Heart right ventricle (tissue), 16 donors: ENCODE measurements at regions of chr5 and their contacts with region 1.

Region 1: DNA sequence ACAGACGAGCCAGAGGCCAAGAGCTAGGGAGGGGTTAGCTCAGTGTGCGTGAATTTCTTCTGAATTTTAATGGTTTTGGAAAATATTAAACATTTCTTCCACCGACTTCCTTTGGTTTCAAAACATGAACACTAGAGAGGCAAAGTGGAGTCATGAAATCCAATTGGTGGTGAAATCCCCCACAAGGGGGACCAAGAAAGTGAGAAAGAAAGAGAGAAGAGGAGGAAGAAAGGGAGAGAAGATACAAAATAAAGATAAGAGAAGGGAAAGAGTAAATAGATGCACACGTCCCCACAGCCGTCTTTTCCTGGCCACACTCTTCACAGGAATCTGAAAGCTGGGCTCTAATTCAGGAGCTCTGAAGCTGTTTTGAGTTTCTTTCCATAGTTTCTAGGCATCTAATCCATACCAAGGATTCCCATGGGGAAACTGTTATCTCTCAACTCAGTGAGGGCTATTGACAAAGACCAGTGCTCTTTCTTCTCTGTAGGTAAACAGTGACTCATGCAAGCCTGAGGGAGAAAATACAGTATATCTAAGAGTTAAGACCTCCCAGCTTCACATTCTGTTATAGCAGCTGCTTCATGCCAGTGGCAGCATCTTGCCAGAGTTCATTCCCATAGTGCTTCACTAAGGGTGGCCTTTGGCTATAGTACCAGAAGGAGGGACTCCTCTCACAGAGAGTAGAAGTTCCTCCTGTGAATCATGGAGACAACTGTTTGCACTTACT is 115.8 kb upstream of the LIFR start:
- DNase-seq: no peak
- ATAC-seq: no peak
- H3K4me3 ChIP-seq: no peak overlapping the region
- H3K27ac ChIP-seq: no peak overlapping the region
- H3K4me1 ChIP-seq: no peaks in the 10 kb centered on the region
- H3K27me3 ChIP-seq: no peaks in the 10 kb centered on the region
- CTCF ChIP-seq: no peak

Region 2: GRCh38 chr5:38329132-38329715 is 343.0 kb before region 1 on chr5:
- intact Hi-C with region 1: no loop called
- DNase-seq: no peak
- ATAC-seq: no peak
- H3K4me3 ChIP-seq: no peak overlapping the region
- H3K27ac ChIP-seq: no peak overlapping the region
- H3K4me1 ChIP-seq: peaks cover 0 to 3% (median 0%) of the 10 kb centered on the region in 9 donors
- H3K27me3 ChIP-seq: no peaks in the 10 kb centered on the region
- CTCF ChIP-seq: no peak

Region 3: DNA sequence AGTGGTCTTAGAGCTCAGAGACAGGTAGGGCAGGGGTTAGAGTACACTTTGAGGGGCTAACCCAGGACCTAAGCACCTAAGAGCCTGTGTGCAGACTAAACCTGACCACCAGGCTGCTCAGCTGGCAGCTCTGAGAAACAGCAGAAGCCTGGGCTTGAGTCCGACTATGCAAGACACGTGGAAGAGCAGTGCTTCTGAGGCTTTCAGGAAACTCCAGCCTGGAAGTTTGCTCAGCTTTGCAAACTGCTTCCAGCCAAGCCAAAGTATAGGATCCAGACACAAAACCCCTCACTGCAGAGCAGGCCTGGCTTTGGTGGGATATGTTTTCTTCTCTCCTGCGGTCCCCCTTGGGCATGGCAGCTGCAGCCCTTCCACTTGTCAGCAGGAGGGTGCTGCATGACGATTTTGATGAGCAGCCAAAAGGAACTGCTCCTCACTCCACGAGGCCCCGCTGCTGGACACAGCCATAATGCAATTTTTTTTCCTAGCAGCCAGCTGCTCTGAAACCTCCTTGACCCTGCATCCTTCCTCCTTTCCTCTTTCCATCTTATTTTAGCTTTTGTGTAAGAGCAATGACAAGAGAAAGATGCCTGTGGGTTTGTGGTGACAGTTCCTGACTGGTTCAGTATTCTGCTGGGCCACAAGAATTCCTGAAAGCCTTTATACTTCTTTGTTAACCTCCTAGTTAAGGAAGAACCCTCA is 238.9 kb before region 1 on chr5:
- intact Hi-C with region 1: loop called in 1 of 10 experiments (anchors 5 kb)
- DNase-seq: peak; percentile 59 to 76
- ATAC-seq: peak; percentile 84 to 91 (median 88)
- H3K4me3 ChIP-seq: no peak overlapping the region
- H3K27ac ChIP-seq: peak overlapping the region in 6 of 10 donors; percentile 14 to 69 (median 36)
- H3K4me1 ChIP-seq: peaks cover 6 to 35% (median 18%) of the 10 kb centered on the region in 9 donors
- H3K27me3 ChIP-seq: peaks cover 0 to 65% (median 0%) of the 10 kb centered on the region in 7 donors
- CTCF ChIP-seq: peak in 1 of 9 donors; percentile 19

Region 4: GRCh38 chr5:38540314-38540713 is 131.9 kb before region 1 on chr5:
- intact Hi-C with region 1: no loop called
- DNase-seq: peak; percentile 32 to 39
- ATAC-seq: peak; percentile 75 to 95 (median 92)
- H3K4me3 ChIP-seq: no peak overlapping the region
- H3K27ac ChIP-seq: peak overlapping the region in 6 of 10 donors; percentile 3 to 37 (median 14)
- H3K4me1 ChIP-seq: peaks cover 6 to 97% (median 48%) of the 10 kb centered on the region in 9 donors
- H3K27me3 ChIP-seq: no peaks in the 10 kb centered on the region
- CTCF ChIP-seq: no peak

Region 5: DNA sequence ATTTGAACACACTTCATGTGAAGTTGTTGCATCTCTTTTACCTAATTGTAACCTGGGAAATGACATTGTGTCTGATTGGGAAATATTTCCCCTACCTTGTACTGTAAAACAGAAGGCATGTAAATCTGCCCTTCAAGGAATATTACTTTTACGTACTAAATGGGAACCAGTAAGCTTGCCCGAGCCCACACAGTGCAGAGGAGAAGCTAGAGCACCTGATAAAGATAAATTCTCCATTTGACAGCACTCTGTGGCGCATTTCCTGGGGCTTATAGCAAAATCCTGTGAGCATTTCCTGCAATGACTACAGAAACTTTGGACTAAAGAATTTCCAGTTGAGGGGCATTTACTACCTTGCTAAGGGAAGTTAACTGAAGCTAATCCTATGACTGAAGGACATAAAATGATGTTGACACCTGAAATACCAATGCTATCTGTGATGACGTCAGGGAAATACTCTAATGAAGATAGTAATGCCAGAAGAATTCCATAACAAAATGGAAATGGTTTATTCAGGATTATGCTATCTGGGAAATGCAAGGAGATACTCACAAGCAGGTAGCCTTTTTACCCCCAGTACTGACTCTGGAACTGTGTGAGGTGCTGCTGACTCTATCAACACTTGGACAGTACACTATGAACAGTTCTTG is 37.4 kb before region 1 on chr5:
- intact Hi-C with region 1: no loop called
- DNase-seq: no peak
- ATAC-seq: no peak
- H3K4me3 ChIP-seq: no peak overlapping the region
- H3K27ac ChIP-seq: no peak overlapping the region
- H3K4me1 ChIP-seq: no peaks in the 10 kb centered on the region
- H3K27me3 ChIP-seq: no peaks in the 10 kb centered on the region
- CTCF ChIP-seq: no peak